ENCODE measurements at regions of chr1 and their contacts with region 1.

Region 1: DNA sequence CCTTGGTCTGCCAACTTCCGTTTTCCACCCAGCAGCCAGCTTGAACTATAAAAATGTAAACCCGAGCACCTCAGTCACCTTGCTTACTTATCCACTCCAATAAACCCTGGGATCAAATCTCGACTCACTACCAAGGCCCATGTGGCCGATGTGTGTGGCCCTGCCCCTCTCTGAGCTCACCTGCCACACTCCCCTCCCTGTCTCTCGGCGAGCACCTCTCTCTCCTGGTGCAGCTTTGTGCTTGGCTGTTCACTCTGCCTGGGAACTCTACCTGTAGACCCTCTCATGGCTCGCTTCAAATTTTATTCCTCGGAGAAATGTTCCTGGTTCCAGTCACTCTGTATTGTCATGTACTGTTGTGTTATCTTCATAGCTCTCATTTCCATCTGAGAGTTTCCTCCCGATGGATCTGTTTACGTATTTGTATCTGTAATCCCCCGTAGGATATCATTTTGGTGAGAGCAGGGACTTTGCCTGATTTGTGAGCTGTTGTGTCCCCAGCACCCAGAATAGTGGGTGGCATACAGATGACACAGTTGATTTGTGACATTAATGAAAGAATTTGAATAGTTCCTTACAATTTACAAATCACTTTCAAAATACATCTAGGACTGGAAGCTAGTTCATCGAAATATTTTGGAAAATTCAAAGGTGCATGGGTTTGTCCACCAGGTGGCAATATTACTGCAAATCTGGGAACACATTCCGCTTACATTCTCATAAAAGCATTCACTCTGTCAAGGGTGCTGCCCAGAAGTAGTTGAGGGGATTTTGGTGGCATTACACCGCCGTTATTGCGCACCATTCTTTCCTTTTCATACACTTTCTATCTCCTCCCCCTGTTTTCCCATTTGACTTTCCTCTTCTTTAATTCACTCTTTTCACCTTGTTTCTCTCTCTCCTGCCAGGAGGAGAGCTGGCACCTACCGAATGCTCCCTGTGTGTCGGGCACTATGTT is 95.3 kb downstream of the ABCA4 start:
- DNase-seq: peak; percentile 56
- H3K4me3 ChIP-seq: no peak overlapping the region
- H3K27ac ChIP-seq: no peak overlapping the region
- H3K4me1 ChIP-seq: peaks cover under 1% of the 10 kb centered on the region
- H3K27me3 ChIP-seq: no peaks in the 10 kb centered on the region
- CTCF ChIP-seq: peak; percentile 82 to 84 (median 82)
- POLR2A ChIP-seq: no peak

Region 2: GRCh38 chr1:94335950-94336349 is 310.3 kb after region 1 on chr1:
- intact Hi-C with region 1: loop called (anchors 5 kb)
- DNase-seq: peak; percentile 89
- H3K4me3 ChIP-seq: no peak overlapping the region
- H3K27ac ChIP-seq: no peak overlapping the region
- H3K4me1 ChIP-seq: peaks cover 24% of the 10 kb centered on the region
- H3K27me3 ChIP-seq: no peaks in the 10 kb centered on the region
- CTCF ChIP-seq: peak; percentile 74 to 95 (median 92)
- POLR2A ChIP-seq: no peak